Activated CD4-positive, alpha-beta T cell treated with anti-CD3 and anti-CD28 coated beads for 36 hours (primary cell): ENCODE measurements at regions of chr2 and their contacts with region 1.

Region 1: DNA sequence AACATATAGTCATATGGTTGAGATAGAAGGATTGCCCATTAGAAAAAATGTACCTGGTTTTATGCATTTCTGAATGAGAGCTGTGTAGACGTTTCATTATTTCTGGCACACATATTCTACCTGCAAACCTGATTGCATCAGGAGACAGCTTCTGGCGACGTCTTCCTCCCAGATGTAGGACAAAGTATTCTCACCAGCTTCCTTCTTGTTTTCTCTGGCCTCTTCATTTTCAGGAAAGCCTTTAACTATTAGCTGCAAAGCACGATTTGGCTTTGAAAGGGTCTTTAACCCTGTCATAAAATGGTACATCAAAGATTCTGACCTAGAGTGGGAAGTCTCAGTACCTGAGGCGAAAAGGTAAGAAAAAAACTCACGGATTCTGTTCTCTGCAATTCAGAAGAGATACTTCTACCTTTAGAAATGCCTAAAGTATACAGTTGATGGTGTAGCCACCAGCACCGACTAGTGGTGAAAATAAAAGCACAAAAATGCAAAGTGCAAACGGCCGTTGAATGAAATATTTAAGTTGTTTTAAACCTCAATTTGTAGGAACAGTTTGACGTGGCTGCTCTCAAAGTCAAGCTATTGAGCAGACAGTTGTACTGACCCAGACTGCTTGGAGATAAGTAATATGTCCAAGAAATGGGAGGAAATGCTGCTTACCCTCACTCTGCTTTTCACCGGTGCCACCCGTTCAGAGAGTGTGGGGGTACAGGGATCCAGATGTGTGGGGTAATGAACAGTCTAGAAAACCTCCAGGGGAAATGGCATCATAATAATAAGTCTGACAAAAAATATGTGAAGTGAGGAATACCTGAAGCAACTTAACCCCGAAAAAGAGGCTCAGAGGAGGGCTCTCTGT is 20.2 kb downstream of the IL18RAP start:
- DNase-seq: peak; percentile 65
- ATAC-seq: peak; percentile 84
- H3K4me3 Mint-ChIP-seq: no peak overlapping the region
- H3K27ac Mint-ChIP-seq: peak overlapping the region; percentile 56
- H3K4me1 Mint-ChIP-seq: peaks cover 11% of the 10 kb centered on the region
- H3K27me3 Mint-ChIP-seq: no peaks in the 10 kb centered on the region

Region 2: GRCh38 chr2:101883863-101884262 is 559.3 kb before region 1 on chr2:
- CTCF ChIA-PET with region 1: interaction called, 12 read pairs
- POLR2A ChIA-PET with region 1: no interaction called
- intact Hi-C with region 1: loop called in 1 of 2 experiments (anchors 1 kb)
- DNase-seq: peak; percentile 67
- ATAC-seq: peak; percentile 90
- H3K4me3 Mint-ChIP-seq: no peak overlapping the region
- H3K27ac Mint-ChIP-seq: peak overlapping the region; percentile 12
- H3K4me1 Mint-ChIP-seq: peaks cover 18% of the 10 kb centered on the region
- H3K27me3 Mint-ChIP-seq: no peaks in the 10 kb centered on the region

Region 3: DNA sequence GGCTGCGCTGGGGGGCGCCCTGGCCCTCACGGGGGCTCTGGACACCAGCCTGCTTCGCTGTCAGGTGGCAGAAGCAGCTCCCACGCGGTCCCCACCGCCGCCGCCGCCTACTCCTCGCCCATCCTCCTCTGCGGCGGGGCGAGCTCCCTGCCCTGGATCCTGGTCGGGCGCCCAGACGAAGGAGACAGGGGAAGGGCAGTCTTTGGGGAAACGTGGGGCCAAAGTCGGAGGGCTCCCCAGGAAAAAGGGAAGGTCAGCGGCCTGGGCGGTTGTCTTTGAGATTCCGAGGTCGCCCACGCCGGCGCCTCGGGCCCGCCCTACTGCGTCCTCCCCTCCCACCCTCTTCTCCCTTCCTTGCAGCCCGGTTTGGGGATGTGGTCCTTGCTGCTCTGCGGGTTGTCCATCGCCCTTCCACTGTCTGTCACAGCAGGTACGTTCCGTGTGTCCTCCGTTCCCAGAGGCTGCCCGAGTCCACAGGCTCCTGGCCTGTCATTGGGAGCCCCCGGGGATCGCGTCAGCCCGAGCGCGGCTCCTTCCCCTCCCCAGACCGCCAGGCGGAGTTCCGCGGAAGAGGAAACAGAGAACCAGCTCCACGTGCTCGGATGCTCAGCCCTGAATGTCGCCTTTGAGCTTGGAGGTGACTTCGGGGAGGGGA is 255.6 kb before region 1 on chr2:
- CTCF ChIA-PET with region 1: interaction called, 7 read pairs
- POLR2A ChIA-PET with region 1: no interaction called
- intact Hi-C with region 1: loop called in 1 of 2 experiments (anchors 5 kb)
- DNase-seq: peak; percentile 70
- ATAC-seq: peak; percentile 76
- H3K4me3 Mint-ChIP-seq: peak overlapping the region; percentile 65
- H3K27ac Mint-ChIP-seq: peak overlapping the region; percentile 90
- H3K4me1 Mint-ChIP-seq: peaks cover 24% of the 10 kb centered on the region
- H3K27me3 Mint-ChIP-seq: peaks cover 8% of the 10 kb centered on the region

Region 4: GRCh38 chr2:102224824-102225739 is 218.1 kb before region 1 on chr2:
- CTCF ChIA-PET with region 1: no interaction called
- POLR2A ChIA-PET with region 1: no interaction called
- intact Hi-C with region 1: no loop called
- DNase-seq: no peak
- ATAC-seq: no peak
- H3K4me3 Mint-ChIP-seq: no peak overlapping the region
- H3K27ac Mint-ChIP-seq: peak overlapping the region; percentile 60
- H3K4me1 Mint-ChIP-seq: peaks cover 56% of the 10 kb centered on the region
- H3K27me3 Mint-ChIP-seq: no peaks in the 10 kb centered on the region

Region 5: DNA sequence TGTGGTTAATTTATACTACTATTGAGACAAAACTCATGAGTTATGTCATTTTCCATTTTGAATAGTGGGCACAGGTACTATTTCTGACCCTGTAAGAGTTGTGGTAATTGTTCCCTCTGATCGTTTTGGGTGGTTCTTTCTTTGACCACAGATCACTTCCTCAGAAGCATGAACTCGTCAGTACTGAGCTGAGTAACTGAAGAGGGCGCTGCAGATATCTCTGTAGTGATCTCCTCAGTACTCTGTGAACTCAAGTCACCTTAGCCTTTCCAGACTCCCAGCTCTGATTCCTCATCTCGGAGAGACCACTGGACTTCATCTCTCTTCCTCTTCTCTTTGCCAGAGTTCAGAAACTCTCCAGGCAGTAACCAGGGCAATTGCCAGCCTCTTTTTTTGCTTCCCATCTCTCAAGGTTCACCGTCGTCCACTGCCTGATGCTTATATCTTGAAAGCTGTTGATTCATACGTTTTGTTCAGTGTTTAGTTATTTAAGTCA is 141.3 kb before region 1 on chr2:
- CTCF ChIA-PET with region 1: interaction called, 11 read pairs
- POLR2A ChIA-PET with region 1: no interaction called
- intact Hi-C with region 1: loop called in 1 of 2 experiments (anchors 1 kb)
- DNase-seq: peak; percentile 66
- ATAC-seq: peak; percentile 88
- H3K4me3 Mint-ChIP-seq: peak overlapping the region; percentile 17
- H3K27ac Mint-ChIP-seq: peak overlapping the region; percentile 58
- H3K4me1 Mint-ChIP-seq: peaks cover 46% of the 10 kb centered on the region
- H3K27me3 Mint-ChIP-seq: peaks cover 3% of the 10 kb centered on the region

Region 6: GRCh38 chr2:102321941-102322719 is 121.1 kb before region 1 on chr2:
- CTCF ChIA-PET with region 1: no interaction called
- POLR2A ChIA-PET with region 1: no interaction called
- intact Hi-C with region 1: no loop called
- DNase-seq: no peak
- ATAC-seq: no peak
- H3K4me3 Mint-ChIP-seq: no peak overlapping the region
- H3K27ac Mint-ChIP-seq: no peak overlapping the region
- H3K4me1 Mint-ChIP-seq: no peaks in the 10 kb centered on the region
- H3K27me3 Mint-ChIP-seq: no peaks in the 10 kb centered on the region

Region 7: DNA sequence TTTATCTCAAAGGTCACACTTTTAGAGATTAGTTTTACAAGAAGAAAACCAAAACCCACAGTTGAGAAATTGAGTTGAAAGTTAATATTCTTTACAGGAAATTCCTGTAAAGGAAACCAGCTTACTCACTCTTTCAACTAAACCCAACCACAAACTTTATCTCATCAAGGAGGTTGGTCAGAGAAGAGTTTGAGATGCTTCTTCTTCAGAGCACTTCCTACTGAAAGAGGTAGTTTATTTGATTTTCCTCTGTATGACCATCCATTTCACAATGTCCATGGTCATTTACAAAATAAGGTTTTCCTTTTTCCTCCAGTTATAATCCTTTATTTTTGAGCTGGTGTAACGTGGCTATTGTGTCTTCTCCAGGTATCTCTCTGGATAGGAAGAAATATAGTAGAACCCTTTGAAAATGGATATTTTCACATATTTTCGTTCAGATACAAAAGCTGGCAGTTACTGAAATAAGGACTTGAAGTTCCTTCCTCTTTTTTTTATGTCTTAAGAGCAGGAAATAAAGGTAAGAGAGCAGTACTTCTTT is 24.7 kb before region 1 on chr2:
- CTCF ChIA-PET with region 1: interaction called, 20 read pairs
- POLR2A ChIA-PET with region 1: no interaction called
- intact Hi-C with region 1: no loop called
- DNase-seq: no peak
- ATAC-seq: peak; percentile 61
- H3K4me3 Mint-ChIP-seq: peak overlapping the region; percentile 70
- H3K27ac Mint-ChIP-seq: peak overlapping the region; percentile 90
- H3K4me1 Mint-ChIP-seq: peaks cover 57% of the 10 kb centered on the region
- H3K27me3 Mint-ChIP-seq: peaks cover 7% of the 10 kb centered on the region